Keratinocyte (primary cell): ENCODE measurements at regions of chr22 and their contacts with region 1.

Region 1: GRCh38 chr22:31055635-31056159 is 25.4 kb upstream of the SMTN start:
- DNase-seq: peak; percentile 81
- H3K4me3 ChIP-seq: no peak overlapping the region
- H3K27ac ChIP-seq: peak overlapping the region; percentile 49
- H3K4me1 ChIP-seq: peaks cover 16% of the 10 kb centered on the region
- H3K27me3 ChIP-seq: no peaks in the 10 kb centered on the region
- CTCF ChIP-seq: no peak

Region 2: GRCh38 chr22:30777587-30777986 is 278.1 kb before region 1 on chr22:
- dilution Hi-C with region 1: no loop called
- DNase-seq: no peak
- H3K4me3 ChIP-seq: no peak overlapping the region
- H3K27ac ChIP-seq: no peak overlapping the region
- H3K4me1 ChIP-seq: peaks cover 7% of the 10 kb centered on the region
- H3K27me3 ChIP-seq: no peaks in the 10 kb centered on the region
- CTCF ChIP-seq: no peak

Region 3: GRCh38 chr22:30968924-30969539 is 86.7 kb before region 1 on chr22 and contains the start of gene TUG1:
- dilution Hi-C with region 1: loop called (anchors 25 kb)
- DNase-seq: peak; percentile 85
- H3K4me3 ChIP-seq: peak within 1 kb of the TSS; percentile 67 to 89 (median 85)
- H3K27ac ChIP-seq: peak within 1 kb of the TSS; percentile 72
- H3K4me1 ChIP-seq: peaks cover 14% of the 10 kb centered on the region
- H3K27me3 ChIP-seq: no peaks in the 10 kb centered on the region
- CTCF ChIP-seq: no peak
- polyA plus RNA-seq, gene TUG1: 47.7 to 84.0 TPM (median 77.1 TPM) in 3 replicates